Thyroid gland (tissue), 4 donors: ENCODE measurements at regions of chr3 and their contacts with region 1.

Region 1: DNA sequence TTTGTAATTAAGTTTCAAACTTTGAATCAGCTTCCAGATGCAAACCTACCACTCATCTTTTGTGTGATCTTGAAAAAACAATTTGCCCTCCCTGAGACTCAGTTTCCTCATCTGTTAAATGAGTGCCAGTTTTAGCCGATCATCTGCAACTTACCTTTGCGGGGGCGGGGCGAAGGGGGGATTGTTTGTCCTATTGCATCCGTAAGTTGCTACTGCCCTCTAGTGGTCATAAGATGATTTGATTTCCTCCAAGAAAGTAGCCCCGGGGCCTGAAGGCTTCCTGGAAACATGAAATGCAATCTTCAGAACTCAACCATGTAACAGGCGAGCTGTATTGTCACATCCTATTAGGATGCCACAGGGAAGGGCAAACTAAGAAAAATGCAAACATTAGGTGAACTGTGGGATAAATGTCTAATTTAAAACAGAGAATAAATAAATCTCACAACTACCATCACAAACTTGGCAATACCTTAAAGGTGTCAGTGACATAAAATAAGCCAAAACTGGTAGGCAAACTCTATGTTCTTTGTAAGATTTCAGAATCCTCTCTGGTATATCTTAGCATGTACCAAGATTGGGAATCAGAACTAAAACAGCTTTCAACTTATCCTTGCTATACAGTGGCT is 63.5 kb upstream of the CLDN18 start:
- DNase-seq: peak; percentile 56 to 58
- H3K4me3 ChIP-seq: no peak overlapping the region
- H3K27ac ChIP-seq: no peak overlapping the region
- H3K4me1 ChIP-seq: no peaks in the 10 kb centered on the region
- H3K27me3 ChIP-seq: no peaks in the 10 kb centered on the region
- CTCF ChIP-seq: peak in 5 of 6 experiments; percentile 33 to 70 (median 62)
- POLR2A ChIP-seq: no peak

Region 2: DNA sequence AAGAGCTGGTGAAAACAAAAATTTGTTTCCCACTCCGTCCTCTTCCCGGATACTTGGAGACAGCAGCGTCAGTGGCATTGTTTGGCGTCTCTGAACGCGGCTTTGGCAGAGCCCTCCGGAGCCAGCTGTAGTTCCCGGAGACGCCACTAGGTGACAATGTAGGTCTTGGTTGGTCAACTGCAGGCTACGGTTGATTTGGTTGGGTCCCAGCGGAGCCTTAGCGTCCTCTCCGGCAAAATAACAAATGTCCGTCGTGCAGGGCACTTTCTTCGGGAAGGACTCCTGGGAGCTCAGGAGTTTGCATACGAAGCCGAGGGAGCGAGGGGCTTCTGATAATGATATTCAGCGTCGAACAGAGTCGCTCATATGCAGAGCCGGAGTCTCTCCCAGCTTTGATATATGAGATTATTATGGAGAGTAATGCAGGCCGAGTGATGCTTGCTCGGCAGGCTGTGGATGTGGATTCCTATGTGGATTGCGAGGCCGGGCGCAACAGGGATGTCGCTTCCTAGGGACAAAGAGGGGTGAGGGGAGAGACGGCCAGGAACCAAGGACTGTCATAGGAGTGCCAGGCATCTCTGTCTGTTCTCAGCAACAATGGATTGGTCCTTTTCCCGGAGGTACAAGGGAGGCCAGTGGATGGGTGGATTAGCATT is 913.9 kb before region 1 on chr3:
- intact Hi-C with region 1: loop called (anchors 10 kb)
- DNase-seq: peak; percentile 89 to 91
- H3K4me3 ChIP-seq: peak overlapping the region in 1 of 3 donors; percentile 12
- H3K27ac ChIP-seq: no peak overlapping the region
- H3K4me1 ChIP-seq: peaks cover 0 to 6% of the 10 kb centered on the region in 2 donors
- H3K27me3 ChIP-seq: no peaks in the 10 kb centered on the region
- CTCF ChIP-seq: peak; percentile 86 to 100 (median 90)
- POLR2A ChIP-seq: no peak